HCT116 (cell line): ENCODE measurements at regions of chr1 and their contacts with region 1.

Region 1: DNA sequence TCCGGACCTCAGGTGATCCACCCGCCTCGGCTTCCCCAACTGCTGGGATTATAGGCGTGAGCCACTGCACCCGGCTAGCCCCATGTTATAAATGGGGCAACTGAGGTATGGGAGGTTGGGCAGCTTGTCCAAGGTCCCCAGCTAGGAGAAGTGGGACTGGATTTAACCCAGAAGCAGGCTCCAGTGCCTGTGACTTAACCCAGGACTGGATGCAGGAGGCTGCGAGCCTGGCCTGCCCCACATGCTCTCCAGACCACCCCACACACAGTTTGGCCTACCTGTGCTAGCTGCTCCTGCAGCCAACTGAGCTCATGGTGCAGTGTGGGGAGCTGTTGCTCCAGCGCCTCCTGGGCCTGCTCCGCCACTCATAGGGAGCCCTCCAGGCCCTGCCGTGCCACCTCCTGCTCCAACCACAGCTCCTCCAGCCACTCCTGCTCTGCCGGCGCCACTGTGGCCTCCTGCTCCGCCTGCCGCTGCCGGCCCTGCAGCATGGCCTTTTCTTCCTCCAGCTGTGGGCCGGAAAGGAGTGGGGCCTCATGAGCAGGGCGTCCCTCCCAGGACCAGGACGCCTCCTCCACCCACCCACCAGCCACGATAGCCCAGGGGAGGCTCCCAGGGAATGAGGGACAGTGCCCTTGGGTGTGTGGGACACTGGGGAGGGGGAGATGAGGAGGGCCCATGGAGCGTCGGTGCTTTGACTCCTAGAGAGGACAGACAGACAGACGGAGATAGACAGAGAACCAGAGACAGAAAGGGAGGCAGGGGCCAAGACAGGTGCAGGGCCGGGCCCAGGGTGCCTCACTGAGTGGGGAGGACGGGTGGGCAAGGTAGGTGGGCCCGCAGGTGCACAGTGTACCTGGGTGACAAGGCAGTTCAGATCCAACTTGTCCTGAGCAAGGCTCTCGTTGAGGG is 12.4 kb upstream of the NBPF1 start:
- DNase-seq: no peak
- ATAC-seq: no peak
- H3K4me3 ChIP-seq: no peak overlapping the region
- H3K27ac ChIP-seq: no peak overlapping the region
- H3K4me1 ChIP-seq: peaks cover 0 to 8% of the 10 kb centered on the region in 2 experiments; a peak in 2 of 4 replicates
- H3K27me3 ChIP-seq: no peaks in the 10 kb centered on the region
- CTCF ChIP-seq: 0 out of 6 replicates have a peak, but pooled peaks of 1 of the 3 experiments have one; percentile 1
- POLR2A ChIP-seq: no peak
- RAD21 ChIP-seq: no peak

Region 2: DNA sequence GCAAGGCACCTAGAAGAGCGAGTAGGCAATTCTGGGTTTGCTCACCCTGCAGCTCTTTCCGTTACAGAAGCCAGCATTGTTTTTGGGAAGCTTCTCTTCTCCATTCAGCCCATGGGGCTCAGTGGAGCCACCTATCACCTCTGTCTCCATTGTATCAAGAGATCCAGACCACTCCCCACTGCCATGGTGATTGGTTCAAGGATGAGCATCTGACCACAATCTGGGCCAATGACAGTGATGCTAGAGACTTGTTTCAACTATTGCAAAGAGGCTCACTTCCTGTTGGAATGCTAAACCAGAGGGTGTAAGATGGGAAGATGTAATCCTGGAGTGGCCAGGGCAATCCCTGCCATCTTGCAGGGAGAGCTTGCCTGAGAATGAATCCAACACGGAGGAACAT is 195.1 kb before region 1 on chr1:
- CTCF ChIA-PET with region 1: no interaction called
- POLR2A ChIA-PET with region 1: no interaction called
- RAD21 ChIA-PET with region 1: no interaction called
- intact Hi-C with region 1: no loop called
- DNase-seq: peak; percentile 32
- ATAC-seq: peak; percentile 88
- H3K4me3 ChIP-seq: no peak overlapping the region
- H3K27ac ChIP-seq: no peak overlapping the region
- H3K4me1 ChIP-seq: peaks cover 0 to 4% of the 10 kb centered on the region in 2 experiments; a peak in 1 of 4 replicates
- H3K27me3 ChIP-seq: no peaks in the 10 kb centered on the region
- CTCF ChIP-seq: no peak
- POLR2A ChIP-seq: no peak
- RAD21 ChIP-seq: no peak

Region 3: GRCh38 chr1:16613185-16614147 is 12.3 kb before region 1 on chr1 and contains the start of gene NBPF1:
- CTCF ChIA-PET with region 1: interaction called, 30 read pairs
- POLR2A ChIA-PET with region 1: interaction called, 4 read pairs
- RAD21 ChIA-PET with region 1: interaction called in 1 of 2 experiments, 3 read pairs
- intact Hi-C with region 1: no loop called
- DNase-seq: peak; percentile 94
- ATAC-seq: peak; percentile 98
- H3K4me3 ChIP-seq: peak within 1 kb of the TSS; percentile 61 to 75
- H3K27ac ChIP-seq: peak within 1 kb of the TSS; percentile 58
- H3K4me1 ChIP-seq: peaks cover 16 to 23% of the 10 kb centered on the region in 2 experiments
- H3K27me3 ChIP-seq: no peaks in the 10 kb centered on the region
- CTCF ChIP-seq: no peak
- POLR2A ChIP-seq: peak; percentile 97
- RAD21 ChIP-seq: no peak
- total RNA-seq, gene NBPF1: 46.0 TPM

Region 4: GRCh38 chr1:16938351-16939321 is 312.9 kb after region 1 on chr1:
- CTCF ChIA-PET with region 1: interaction called, 4 read pairs
- POLR2A ChIA-PET with region 1: no interaction called
- RAD21 ChIA-PET with region 1: no interaction called
- intact Hi-C with region 1: loop called (anchors 2 kb)
- DNase-seq: no peak
- ATAC-seq: no peak
- H3K4me3 ChIP-seq: no peak overlapping the region
- H3K27ac ChIP-seq: no peak overlapping the region
- H3K4me1 ChIP-seq: no peaks in the 10 kb centered on the region
- H3K27me3 ChIP-seq: no peaks in the 10 kb centered on the region
- CTCF ChIP-seq: no peak
- POLR2A ChIP-seq: no peak
- RAD21 ChIP-seq: no peak

Region 5: GRCh38 chr1:16960560-16961296 is 335.0 kb after region 1 on chr1:
- CTCF ChIA-PET with region 1: interaction called, 23 read pairs
- POLR2A ChIA-PET with region 1: no interaction called
- RAD21 ChIA-PET with region 1: no interaction called
- intact Hi-C with region 1: no loop called
- DNase-seq: peak; percentile 72
- ATAC-seq: peak; percentile 91
- H3K4me3 ChIP-seq: peak overlapping the region; percentile 35 to 54
- H3K27ac ChIP-seq: peak overlapping the region; percentile 84
- H3K4me1 ChIP-seq: peaks cover 12 to 17% of the 10 kb centered on the region in 2 experiments
- H3K27me3 ChIP-seq: no peaks in the 10 kb centered on the region
- CTCF ChIP-seq: peak; percentile 63 to 85 (median 66)
- POLR2A ChIP-seq: no peak
- RAD21 ChIP-seq: peak; percentile 38